ENCODE measurements at regions of chr4 and their contacts with region 1.

Region 1: DNA sequence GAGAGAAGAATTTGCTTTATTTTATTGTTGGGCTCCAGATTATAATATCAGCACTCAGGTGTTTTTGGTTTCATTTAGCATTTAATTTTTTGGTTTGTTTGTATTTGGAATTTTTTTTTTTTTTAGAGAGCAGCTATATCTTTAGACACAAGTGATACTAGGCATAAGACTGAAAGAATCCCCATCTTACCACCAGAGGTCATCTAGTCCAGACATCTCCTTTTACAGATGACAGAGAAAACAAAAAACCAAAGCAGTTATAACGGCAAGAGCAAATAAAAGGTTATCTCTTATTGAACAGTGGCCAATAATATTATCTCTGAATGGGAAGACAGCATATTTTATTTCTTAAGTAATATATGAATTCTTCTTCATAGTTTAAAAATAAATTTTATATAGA is 22.8 kb downstream of the USP38 start:
- DNase-seq: no peak
- CTCF ChIP-seq: no peak

Region 2: DNA sequence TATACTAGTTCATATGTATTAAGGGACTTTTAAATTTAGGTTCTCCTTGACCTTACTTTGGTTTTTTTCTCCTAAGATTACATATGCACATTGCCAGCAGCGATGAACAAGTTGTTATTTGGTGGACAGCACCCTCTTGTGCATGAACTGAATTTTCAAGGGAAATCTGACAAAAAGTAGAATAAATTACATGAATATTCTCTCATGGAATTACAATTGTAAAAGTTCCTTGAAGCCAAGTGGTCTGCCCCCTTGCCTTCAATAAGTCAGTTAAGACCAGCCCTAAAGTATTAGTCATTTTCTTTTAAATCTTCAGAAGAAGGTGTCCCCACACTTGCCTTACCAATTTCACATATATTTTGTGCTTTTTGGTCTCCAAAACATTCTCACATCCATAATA is 275.3 kb after region 1 on chr4:
- in situ Hi-C with region 1: loop called (anchors 25 kb)
- DNase-seq: peak; percentile 27
- CTCF ChIP-seq: no peak